Naive thymus-derived CD4-positive, alpha-beta T cell (primary cell): ENCODE measurements at regions of chr3 and their contacts with region 1.

Region 1: DNA sequence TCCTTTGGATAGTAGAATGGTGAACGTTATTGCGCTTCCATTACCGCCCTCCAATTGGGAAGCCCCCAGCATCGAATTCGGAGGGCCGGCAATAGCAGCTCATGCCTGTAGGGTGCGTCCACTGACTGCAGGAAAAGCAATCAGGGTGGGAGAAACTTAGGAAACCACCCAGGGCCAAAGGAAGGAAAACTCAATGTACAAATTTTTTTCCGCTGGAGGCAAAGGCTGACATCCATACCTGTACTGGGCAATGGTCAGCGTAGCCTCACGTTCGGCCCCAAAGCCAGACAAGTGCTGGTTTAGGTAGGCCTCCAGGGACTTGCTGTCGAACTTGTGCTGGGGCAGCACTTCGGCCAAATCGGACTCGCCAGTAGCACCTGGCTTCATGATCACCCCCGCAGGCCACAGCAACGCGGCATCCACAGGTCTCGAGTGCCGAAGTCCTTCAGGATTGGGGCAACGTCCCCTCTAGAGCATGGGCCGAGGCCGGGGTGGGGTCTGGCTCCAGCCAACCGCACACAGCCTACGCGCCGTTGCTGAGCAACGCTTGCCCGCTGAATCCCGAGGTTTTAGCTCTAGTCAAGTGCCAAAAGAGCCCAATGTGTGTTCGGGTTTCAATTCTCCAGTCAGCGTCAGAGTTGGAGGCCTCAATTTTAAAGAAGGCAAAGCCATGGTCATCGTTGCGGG is at the start of gene ACAD11:
- DNase-seq: peak in 7 of 9 donors; percentile 2 to 55 (median 18)
- ATAC-seq: peak; percentile 54
- H3K4me3 ChIP-seq: peak within 1 kb of the TSS; percentile 99
- H3K4me3 Mint-ChIP-seq: peak within 1 kb of the TSS; percentile 84 to 98 (median 97)
- H3K27ac ChIP-seq: peak within 1 kb of the TSS; percentile 92
- H3K27ac Mint-ChIP-seq: peak within 1 kb of the TSS; percentile 95 to 98 (median 96)
- H3K4me1 ChIP-seq: peaks cover 9 to 19% of the 10 kb centered on the region in 2 donors
- H3K4me1 Mint-ChIP-seq: peaks cover 42 to 78% (median 67%) of the 10 kb centered on the region in 7 donors
- H3K27me3 ChIP-seq: no peaks in the 10 kb centered on the region
- H3K27me3 Mint-ChIP-seq: no peaks in the 10 kb centered on the region
- total RNA-seq, gene ACAD11: 15.0 to 33.7 (median 27.5) TPM

Region 2: GRCh38 chr3:131502530-131503245 is 1156.8 kb before region 1 on chr3 and contains the start of gene MRPL3:
- CTCF ChIA-PET with region 1: no interaction called
- POLR2A ChIA-PET with region 1: no interaction called
- intact Hi-C with region 1: loop called in 1 of 2 experiments (anchors 5 kb)
- DNase-seq: peak; percentile 68 to 82 (median 78)
- ATAC-seq: peak; percentile 90
- H3K4me3 ChIP-seq: peak within 1 kb of the TSS; percentile 79
- H3K4me3 Mint-ChIP-seq: peak within 1 kb of the TSS; percentile 94 to 100 (median 98)
- H3K27ac ChIP-seq: peak within 1 kb of the TSS; percentile 72
- H3K27ac Mint-ChIP-seq: peak within 1 kb of the TSS; percentile 86 to 98 (median 96)
- H3K4me1 ChIP-seq: peaks cover 23% of the 10 kb centered on the region in 2 donors
- H3K4me1 Mint-ChIP-seq: peaks cover 15 to 65% (median 53%) of the 10 kb centered on the region in 7 donors
- H3K27me3 ChIP-seq: no peaks in the 10 kb centered on the region
- H3K27me3 Mint-ChIP-seq: no peaks in the 10 kb centered on the region
- total RNA-seq, gene MRPL3: 33.8 to 79.2 (median 52.7) TPM

Region 3: DNA sequence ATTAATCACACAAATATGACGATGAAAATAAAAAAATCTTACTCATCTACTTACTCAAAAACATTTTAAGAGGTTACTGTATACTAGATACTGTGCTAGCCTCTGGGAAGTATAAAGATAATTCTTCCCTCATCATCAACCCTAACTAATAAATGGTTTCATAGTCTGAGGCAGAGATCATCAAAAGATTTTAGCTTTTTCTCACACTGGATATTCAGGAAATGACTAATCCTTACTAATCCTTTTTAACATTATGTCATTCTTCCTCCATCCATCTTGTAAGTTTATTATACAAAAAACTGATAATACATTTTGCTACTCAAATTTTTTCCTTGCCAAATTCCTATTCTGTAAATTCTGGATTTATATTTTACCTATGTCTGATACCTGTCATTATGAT is 29.6 kb before region 1 on chr3:
- CTCF ChIA-PET with region 1: no interaction called
- POLR2A ChIA-PET with region 1: no interaction called
- intact Hi-C with region 1: no loop called
- DNase-seq: no peak
- ATAC-seq: no peak
- H3K4me3 ChIP-seq: no peak overlapping the region
- H3K4me3 Mint-ChIP-seq: no peak overlapping the region
- H3K27ac ChIP-seq: no peak overlapping the region
- H3K27ac Mint-ChIP-seq: no peak overlapping the region
- H3K4me1 ChIP-seq: no peaks in the 10 kb centered on the region
- H3K4me1 Mint-ChIP-seq: peaks cover 0 to 3% (median 0%) of the 10 kb centered on the region in 7 donors
- H3K27me3 ChIP-seq: no peaks in the 10 kb centered on the region
- H3K27me3 Mint-ChIP-seq: no peaks in the 10 kb centered on the region

Region 4: DNA sequence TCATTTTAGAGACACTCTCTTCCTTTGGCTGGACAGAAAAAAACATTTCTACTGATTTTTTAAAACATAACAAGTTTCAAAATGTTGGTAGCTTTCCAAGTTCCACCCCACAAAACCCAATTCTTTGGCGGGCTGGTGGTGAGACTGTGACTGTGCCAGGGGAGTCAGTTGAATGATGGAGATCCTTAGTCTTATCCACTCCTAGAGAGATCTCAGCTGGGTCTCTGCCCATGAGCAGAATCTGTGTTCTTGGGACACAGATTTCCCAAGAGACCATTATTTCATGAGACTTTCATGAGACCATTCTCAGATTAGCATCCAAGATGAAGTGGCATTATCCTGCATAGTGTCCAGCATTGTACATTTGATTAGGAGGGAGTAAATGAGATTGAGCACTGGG is 197.8 kb after region 1 on chr3:
- CTCF ChIA-PET with region 1: no interaction called
- POLR2A ChIA-PET with region 1: no interaction called
- intact Hi-C with region 1: no loop called
- DNase-seq: no peak
- ATAC-seq: no peak
- H3K4me3 ChIP-seq: no peak overlapping the region
- H3K4me3 Mint-ChIP-seq: no peak overlapping the region
- H3K27ac ChIP-seq: no peak overlapping the region
- H3K27ac Mint-ChIP-seq: no peak overlapping the region
- H3K4me1 ChIP-seq: no peaks in the 10 kb centered on the region
- H3K4me1 Mint-ChIP-seq: no peaks in the 10 kb centered on the region
- H3K27me3 ChIP-seq: no peaks in the 10 kb centered on the region
- H3K27me3 Mint-ChIP-seq: peaks cover 0 to 9% (median 5%) of the 10 kb centered on the region in 5 donors

Region 5: GRCh38 chr3:133426721-133427120 is 767.2 kb after region 1 on chr3:
- CTCF ChIA-PET with region 1: no interaction called
- POLR2A ChIA-PET with region 1: no interaction called
- intact Hi-C with region 1: loop called in 1 of 2 experiments (anchors 1 kb)
- DNase-seq: no peak
- ATAC-seq: no peak
- H3K4me3 ChIP-seq: no peak overlapping the region
- H3K4me3 Mint-ChIP-seq: no peak overlapping the region
- H3K27ac ChIP-seq: no peak overlapping the region
- H3K27ac Mint-ChIP-seq: peak overlapping the region in 1 of 9 donors; percentile 8
- H3K4me1 ChIP-seq: peaks cover 0 to 3% of the 10 kb centered on the region in 2 donors
- H3K4me1 Mint-ChIP-seq: peaks cover 0 to 4% (median 0%) of the 10 kb centered on the region in 7 donors
- H3K27me3 ChIP-seq: no peaks in the 10 kb centered on the region
- H3K27me3 Mint-ChIP-seq: peaks cover 0 to 7% (median 0%) of the 10 kb centered on the region in 5 donors